HEK293 (cell line): ENCODE measurements at regions of chr9 and their contacts with region 1.

Region 1: DNA sequence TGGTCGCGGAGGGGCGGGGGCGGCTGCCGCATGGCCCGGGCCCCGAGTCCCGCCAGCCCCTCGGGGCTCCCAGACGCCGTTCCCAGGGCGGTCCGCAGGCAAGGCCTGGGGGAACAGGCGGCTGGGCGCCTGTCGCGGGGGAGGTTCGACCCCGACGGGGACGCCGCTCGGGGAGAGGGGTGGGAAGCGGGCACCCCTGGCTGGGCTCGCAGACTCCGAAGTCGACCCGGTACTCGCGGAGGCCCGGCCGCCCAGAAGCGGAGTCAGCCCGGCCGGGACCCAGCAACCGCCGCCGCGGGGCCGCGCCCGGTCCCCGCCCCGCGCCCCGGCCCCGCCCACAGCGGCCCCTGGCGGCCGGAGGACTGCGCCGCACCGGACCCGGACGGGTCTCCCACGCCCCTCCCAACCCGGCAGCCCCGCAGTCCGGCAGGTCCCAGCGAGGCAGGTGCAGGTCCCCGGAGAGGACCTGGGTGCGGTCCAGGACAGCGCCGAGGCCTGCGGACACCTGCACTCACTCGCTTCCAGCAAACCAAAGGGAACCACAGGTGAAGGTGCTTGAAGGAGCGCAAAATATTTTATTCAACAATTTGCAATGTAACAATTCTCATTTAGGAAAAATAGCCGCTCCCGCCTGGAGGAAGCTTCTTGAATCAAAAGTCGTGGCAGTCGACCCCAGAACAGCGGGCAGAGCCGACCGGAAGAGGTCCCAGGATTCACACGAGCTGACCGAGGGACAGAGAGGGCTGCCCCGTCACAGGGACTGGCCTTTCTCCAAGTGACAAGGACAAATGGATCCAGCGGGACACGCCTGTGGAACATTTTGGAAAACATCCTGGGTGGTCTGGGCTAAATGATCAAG is at the start of gene INPP5E:
- H3K4me3 ChIP-seq: peak within 1 kb of the TSS; percentile 81
- H3K27ac ChIP-seq: peak within 1 kb of the TSS; percentile 89; the same call in 1 of the 2 replicates
- H3K4me1 ChIP-seq: 0 out of 2 replicates have a peak, but pooled peaks cover 2% of the 10 kb centered on the region
- CTCF ChIP-seq: no peak

Region 2: GRCh38 chr9:135701959-135702721 is 737.6 kb before region 1 on chr9 and contains the start of gene KCNT1:
- CTCF ChIA-PET with region 1: no interaction called
- POLR2A ChIA-PET with region 1: no interaction called
- H3K4me3 ChIP-seq: peak within 1 kb of the TSS; percentile 17
- H3K27ac ChIP-seq: no peak within 1 kb of the TSS
- H3K4me1 ChIP-seq: no peaks in the 10 kb centered on the region
- CTCF ChIP-seq: no peak; the same call in 1 of the 2 replicates

Region 3: DNA sequence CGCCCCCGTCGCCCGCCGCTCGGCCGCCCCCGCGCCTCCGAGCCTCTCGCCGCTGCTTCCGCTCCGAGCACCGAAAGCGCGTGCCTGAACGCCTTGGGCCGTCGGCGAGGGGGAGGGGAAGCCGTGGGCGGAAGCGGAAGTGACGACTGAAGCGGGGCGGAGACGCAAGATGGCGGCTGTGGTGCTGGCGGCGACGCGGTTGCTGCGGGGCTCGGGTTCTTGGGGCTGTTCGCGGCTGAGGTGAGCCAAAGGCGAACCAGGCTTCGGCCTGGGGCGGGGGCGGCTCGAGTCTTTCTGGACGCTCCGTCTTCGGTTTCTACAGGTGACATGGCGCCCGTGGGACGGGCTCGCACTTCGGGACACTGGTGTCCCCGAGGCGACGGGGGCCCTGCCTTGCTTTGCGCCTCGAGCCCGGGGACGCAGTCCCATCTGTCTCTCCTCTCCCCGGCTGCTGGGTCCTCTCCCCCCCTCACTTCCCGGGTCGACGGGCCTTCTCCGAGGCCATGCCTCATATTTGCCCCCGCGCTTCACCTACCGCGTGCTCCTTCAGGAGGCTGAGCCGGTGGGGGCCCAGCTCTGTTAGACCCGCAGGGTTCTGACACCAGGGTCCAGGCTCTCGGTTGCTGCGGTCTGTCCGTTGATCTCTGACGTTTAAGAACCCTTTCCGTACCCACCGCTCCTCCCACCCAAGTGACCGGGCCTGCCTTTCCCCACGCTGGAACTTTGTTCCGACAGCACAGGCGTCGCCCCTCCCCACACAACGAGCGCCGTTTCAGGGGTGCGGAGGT is 29.1 kb before region 1 on chr9 and contains the starts of genes ENTR1 and PMPCA:
- CTCF ChIA-PET with region 1: interaction called, 12 read pairs
- POLR2A ChIA-PET with region 1: interaction called, 3 read pairs
- H3K4me3 ChIP-seq: peak within 1 kb of the TSS; percentile 75
- H3K27ac ChIP-seq: peak within 1 kb of the TSS; percentile 89; the same call in 1 of the 2 replicates
- H3K4me1 ChIP-seq: peaks cover 11% of the 10 kb centered on the region
- CTCF ChIP-seq: no peak

Region 4: DNA sequence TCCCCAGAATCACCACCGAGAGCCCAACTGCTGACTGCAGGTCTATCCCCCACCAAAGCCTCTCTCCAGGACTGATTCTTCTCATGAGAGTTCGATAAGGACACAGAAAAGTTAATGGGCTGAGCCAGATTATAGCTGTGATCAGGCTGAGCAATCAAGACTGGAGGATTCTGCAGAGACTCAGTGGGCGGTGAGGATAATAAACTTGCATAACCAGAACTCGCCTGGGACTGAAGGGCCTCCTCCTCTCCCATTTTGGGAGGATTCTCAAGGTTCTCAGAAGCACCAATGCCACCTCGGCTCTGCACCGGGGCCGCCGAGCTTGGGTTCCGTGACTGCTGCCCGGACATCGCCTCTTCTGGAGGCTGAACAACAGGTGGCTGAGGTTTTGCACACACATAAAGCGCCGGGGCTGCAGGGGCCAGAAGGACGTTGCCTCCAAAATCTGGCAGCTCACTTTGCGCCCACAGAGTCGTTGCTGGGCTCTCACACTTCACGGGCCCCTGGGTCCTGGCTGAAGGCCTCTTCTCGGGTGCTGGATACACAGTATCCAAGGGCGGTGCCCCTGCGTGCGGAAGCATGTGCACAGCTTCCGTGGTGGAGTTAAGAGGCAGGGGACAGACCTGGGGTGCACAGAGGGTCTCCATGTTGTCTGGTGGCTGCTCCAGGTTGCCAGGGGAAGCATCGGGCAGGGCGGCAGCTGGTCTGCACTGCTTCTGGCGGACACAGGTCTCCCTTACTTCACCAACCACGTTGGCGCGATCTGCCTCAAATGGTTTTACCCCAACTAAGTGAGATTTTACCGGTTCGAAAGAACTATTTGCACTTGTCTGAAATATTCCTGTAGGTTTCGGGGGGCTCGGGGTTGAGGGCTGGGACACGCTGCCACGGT is 35.4 kb after region 1 on chr9:
- CTCF ChIA-PET with region 1: interaction called, 17 read pairs
- POLR2A ChIA-PET with region 1: no interaction called
- H3K4me3 ChIP-seq: no peak overlapping the region
- H3K27ac ChIP-seq: no peak overlapping the region
- H3K4me1 ChIP-seq: no peaks in the 10 kb centered on the region
- CTCF ChIP-seq: no peak

Region 5: DNA sequence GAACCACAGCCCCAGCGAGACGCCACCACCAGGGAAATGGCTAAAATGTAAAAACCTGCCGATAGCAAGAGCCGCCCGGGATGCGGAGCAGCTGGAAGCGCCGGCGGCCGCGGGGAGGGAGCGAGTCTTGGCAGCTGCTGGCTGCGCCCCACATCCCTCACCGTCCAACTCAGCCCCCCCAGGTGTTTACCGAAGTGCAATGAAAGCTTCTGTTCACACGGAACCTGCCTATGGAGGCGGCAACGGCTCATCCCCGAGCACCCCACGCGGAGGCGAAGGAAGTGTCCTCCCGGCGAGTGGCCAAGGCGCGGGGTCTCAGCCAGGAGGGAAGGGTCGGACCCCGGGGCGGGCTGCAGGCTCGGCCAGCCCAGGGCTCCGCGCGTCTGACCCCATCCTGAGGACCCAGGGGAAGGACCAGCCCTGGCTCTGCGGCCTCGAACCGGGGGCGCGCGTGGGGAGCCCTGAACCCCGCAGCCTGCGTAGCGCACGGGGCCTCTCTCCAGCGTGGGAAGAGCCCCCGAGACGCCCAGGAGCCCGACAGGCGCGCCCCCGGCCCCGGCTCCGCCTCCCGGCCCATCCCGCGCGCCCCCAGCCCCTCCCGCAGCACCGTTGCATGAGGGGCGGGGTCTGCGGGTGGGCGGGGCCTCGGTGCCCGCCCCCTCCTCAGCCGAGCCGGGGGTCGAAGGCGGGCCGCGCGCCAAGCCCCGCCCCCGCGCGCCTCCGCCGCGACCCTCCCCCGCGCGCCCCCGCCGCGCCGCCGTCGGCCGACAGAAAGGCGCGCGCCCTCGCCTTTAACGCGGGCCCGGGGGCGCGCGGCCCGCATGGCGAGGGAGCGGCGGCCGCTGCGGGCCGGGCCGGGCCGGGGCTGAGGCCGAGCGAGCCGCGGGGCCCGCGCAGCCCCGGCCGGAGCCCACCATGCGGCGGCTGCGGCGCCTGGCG is 272.2 kb after region 1 on chr9 and contains the start of gene DIPK1B:
- CTCF ChIA-PET with region 1: no interaction called
- POLR2A ChIA-PET with region 1: no interaction called
- H3K4me3 ChIP-seq: peak within 1 kb of the TSS; percentile 70
- H3K27ac ChIP-seq: peak within 1 kb of the TSS; percentile 80
- H3K4me1 ChIP-seq: no peaks in the 10 kb centered on the region
- CTCF ChIP-seq: no peak